A673 (cell line): ENCODE measurements at regions of chr15 and their contacts with region 1.

Region 1: GRCh38 chr15:51801391-51801835 is 28.0 kb upstream of the TMOD3 start:
- DNase-seq: peak; percentile 43
- H3K4me3 ChIP-seq: no peak overlapping the region
- H3K27ac ChIP-seq: no peak overlapping the region
- H3K4me1 ChIP-seq: no peaks in the 10 kb centered on the region
- H3K27me3 ChIP-seq: no peaks in the 10 kb centered on the region
- CTCF ChIP-seq: peak; percentile 59

Region 2: DNA sequence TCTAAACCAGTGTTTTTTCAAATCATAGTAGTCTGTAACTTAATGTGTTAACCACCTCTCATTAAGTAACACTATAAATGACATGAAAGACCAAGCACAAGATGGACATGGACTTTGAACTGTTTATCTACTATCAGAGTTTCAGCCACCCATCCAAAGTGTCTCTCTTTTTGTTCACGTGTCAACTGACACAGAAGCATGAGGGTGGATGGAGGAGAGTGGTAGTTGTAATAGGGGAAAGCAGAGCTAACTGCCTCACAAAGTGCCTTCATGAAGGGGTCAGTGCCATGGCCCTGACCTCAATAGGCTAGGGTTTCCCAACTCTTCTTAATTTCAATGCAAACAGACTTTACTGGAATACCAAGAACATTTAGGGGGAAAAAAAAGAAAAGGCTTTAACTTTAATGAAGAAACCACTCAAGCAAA is 1082.7 kb before region 1 on chr15:
- CTCF ChIA-PET with region 1: no interaction called
- POLR2A ChIA-PET with region 1: no interaction called
- intact Hi-C with region 1: no loop called
- DNase-seq: no peak
- H3K4me3 ChIP-seq: no peak overlapping the region
- H3K27ac ChIP-seq: no peak overlapping the region
- H3K4me1 ChIP-seq: no peaks in the 10 kb centered on the region
- H3K27me3 ChIP-seq: no peaks in the 10 kb centered on the region
- CTCF ChIP-seq: no peak

Region 3: GRCh38 chr15:51475736-51476135 is 325.7 kb before region 1 on chr15:
- CTCF ChIA-PET with region 1: interaction called, 10 read pairs
- POLR2A ChIA-PET with region 1: no interaction called
- intact Hi-C with region 1: no loop called
- DNase-seq: no peak
- H3K4me3 ChIP-seq: no peak overlapping the region
- H3K27ac ChIP-seq: no peak overlapping the region
- H3K4me1 ChIP-seq: peaks cover 18% of the 10 kb centered on the region
- H3K27me3 ChIP-seq: no peaks in the 10 kb centered on the region
- CTCF ChIP-seq: no peak

Region 4: GRCh38 chr15:52246686-52247431 is 445.4 kb after region 1 on chr15:
- CTCF ChIA-PET with region 1: no interaction called
- POLR2A ChIA-PET with region 1: no interaction called
- intact Hi-C with region 1: no loop called
- DNase-seq: no peak
- H3K4me3 ChIP-seq: no peak overlapping the region
- H3K27ac ChIP-seq: no peak overlapping the region
- H3K4me1 ChIP-seq: no peaks in the 10 kb centered on the region
- H3K27me3 ChIP-seq: peaks cover 3% of the 10 kb centered on the region
- CTCF ChIP-seq: no peak